ENCODE measurements at regions of chr9 and their contacts with region 1.

Region 1: GRCh38 chr9:96667361-96667728 is 12.2 kb upstream of the PRXL2C start:
- DNase-seq: no peak
- H3K4me3 ChIP-seq: no peak overlapping the region
- H3K27ac ChIP-seq: no peak overlapping the region
- H3K4me1 ChIP-seq: no peaks in the 10 kb centered on the region
- H3K27me3 ChIP-seq: peaks cover 0 to 5% of the 10 kb centered on the region in 2 donors
- CTCF ChIP-seq: no peak

Region 2: DNA sequence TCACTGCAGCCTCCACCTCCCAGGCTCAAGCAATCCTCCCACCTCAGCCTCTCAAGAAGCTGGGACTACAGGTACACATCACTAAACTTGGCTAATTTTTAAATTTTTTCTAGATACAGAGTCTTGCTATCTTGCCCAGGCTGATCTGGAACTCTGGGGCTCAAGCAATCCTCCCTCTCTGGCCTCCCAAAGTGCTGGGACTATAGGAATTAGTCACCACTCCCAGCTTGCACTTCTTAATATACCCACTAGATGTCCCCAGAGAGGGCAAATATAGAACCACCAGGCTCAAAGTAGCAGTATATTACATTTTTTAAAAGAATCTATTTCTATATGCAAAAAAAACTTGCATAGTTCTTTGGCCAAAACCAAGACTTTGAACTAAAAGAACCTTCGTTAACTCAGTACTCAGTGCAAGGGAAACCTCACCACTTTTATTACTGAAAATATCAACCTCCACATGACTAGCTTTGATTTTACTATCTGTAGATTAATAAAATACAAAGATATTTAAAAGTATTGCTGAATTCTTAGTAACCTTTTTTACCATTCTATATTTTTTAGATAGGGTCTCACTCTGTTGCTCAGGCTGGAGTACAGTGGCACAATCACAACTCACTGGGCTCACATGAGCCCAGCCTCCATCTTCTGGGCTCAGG is 339.5 kb before region 1 on chr9:
- intact Hi-C with region 1: loop called (anchors 5 kb)
- DNase-seq: peak in 1 of 2 donors; percentile 59
- H3K4me3 ChIP-seq: no peak overlapping the region
- H3K27ac ChIP-seq: no peak overlapping the region
- H3K4me1 ChIP-seq: no peaks in the 10 kb centered on the region
- H3K27me3 ChIP-seq: no peaks in the 10 kb centered on the region
- CTCF ChIP-seq: peak; percentile 84 to 88

Measured in tibial artery (tissue), 4 donors.